Dorsolateral prefrontal cortex (tissue), 120 donors: ENCODE measurements at regions of chr3 and their contacts with region 1.

Region 1: GRCh38 chr3:132253262-132253878 is 63.8 kb upstream of the ACP3 start:
- DNase-seq: no peak
- H3K4me3 ChIP-seq: no peak overlapping the region
- H3K27ac ChIP-seq: no peak overlapping the region
- H3K27me3 ChIP-seq: no peaks in the 10 kb centered on the region
- CTCF ChIP-seq: peak; percentile 30 to 80 (median 67)

Region 2: DNA sequence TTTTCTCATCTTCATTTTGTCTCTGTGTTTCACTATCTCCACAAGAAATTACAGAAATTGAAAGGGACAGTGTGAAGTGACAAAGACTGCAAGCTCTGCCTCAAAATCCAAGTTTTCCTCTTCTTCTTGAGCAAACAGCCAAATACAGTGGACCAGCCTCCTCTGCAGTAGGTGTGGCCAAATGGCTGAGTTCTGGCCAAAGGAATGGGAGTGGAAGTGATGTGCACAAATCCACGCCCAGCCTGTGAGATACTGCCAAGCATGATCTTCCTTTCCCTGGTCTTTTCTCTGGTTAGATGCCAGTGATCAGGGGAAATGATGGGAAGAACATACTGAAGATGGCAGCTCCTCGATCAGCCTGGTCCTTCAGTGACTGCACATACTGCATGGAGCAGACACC is 107.5 kb before region 1 on chr3:
- intact Hi-C with region 1: no loop called
- DNase-seq: no peak
- H3K4me3 ChIP-seq: no peak overlapping the region
- H3K27ac ChIP-seq: peak overlapping the region in 2 of 59 donors; percentile 9 to 40
- H3K27me3 ChIP-seq: no peaks in the 10 kb centered on the region
- CTCF ChIP-seq: no peak

Region 3: DNA sequence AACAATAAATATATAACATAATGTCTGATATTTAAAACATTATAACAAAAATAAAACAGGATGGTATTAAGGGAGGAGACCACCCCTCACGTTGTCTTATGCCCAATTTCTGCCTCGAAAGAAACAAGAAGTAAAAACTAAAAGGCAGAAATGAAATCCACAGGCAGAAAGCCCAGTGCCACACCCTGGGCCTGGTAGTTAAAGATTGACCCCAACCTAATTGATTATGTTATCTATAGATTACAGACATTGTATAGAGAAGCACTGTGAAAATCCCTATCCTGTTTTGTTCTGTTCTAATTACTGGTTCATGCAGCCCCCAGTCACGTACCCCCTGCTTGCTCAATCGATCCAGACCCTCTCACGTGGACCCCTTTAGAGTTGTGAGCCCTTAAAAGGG is 41.5 kb after region 1 on chr3:
- intact Hi-C with region 1: no loop called
- DNase-seq: no peak
- H3K4me3 ChIP-seq: no peak overlapping the region
- H3K27ac ChIP-seq: no peak overlapping the region
- H3K27me3 ChIP-seq: peaks cover 0 to 2% (median 0%) of the 10 kb centered on the region in 45 donors
- CTCF ChIP-seq: no peak

Region 4: GRCh38 chr3:132325103-132325606 is 71.8 kb after region 1 on chr3:
- intact Hi-C with region 1: no loop called
- DNase-seq: no peak
- H3K4me3 ChIP-seq: no peak overlapping the region
- H3K27ac ChIP-seq: no peak overlapping the region
- H3K27me3 ChIP-seq: no peaks in the 10 kb centered on the region
- CTCF ChIP-seq: no peak

Region 5: GRCh38 chr3:132343018-132343612 is 89.7 kb after region 1 on chr3:
- intact Hi-C with region 1: loop called (anchors 2 to 5 kb)
- DNase-seq: peak in 2 of 10 donors; percentile 10 to 27
- H3K4me3 ChIP-seq: peak overlapping the region in 18 of 59 donors; percentile 1 to 43 (median 24)
- H3K27ac ChIP-seq: no peak overlapping the region
- H3K27me3 ChIP-seq: no peaks in the 10 kb centered on the region
- CTCF ChIP-seq: peak; percentile 58 to 90 (median 84)

Region 6: DNA sequence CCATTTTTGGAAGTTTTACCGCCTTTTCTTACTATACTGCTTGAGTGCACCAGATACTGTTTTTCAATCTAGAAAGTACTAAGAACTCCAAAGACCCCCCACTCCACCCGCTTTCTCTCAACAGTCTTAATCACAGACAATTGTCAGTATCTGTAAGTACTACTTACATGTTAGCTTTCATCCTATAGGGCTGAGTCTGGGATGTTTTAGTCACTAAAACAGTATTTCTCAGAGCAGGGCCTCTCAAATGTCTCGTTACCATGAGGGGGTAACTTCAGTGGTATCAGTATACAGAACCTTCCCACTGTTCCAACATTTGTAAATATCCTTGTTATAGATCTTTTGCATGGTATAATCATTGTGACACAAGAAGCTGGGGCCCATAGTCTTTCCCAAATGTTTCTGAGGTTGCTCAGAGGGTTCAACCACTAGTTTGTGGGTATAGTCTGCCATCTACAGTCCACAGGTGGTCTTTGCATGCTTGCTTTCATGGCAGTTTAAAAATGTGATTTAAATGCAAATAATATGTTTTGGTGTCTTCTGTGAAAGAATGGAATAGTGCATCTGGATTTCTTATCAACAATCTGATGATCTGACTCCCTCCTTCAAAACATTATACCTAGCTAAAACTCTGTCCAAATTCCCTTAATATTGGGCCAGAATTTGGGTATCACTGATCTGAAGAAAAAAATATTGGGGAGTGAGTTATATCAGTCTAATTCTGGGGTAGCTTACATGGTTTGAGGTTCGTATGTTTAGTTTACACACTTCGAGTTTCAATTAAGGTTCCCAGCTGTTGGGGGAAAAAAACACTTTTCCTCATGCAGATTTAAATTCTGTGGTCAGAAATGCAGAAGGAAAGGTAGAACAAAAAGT is 145.9 kb after region 1 on chr3:
- intact Hi-C with region 1: loop called (anchors 5 to 10 kb)
- DNase-seq: peak in 2 of 10 donors; percentile 41 to 42
- H3K4me3 ChIP-seq: no peak overlapping the region
- H3K27ac ChIP-seq: no peak overlapping the region
- H3K27me3 ChIP-seq: no peaks in the 10 kb centered on the region
- CTCF ChIP-seq: peak; percentile 39 to 97 (median 82)

Region 7: DNA sequence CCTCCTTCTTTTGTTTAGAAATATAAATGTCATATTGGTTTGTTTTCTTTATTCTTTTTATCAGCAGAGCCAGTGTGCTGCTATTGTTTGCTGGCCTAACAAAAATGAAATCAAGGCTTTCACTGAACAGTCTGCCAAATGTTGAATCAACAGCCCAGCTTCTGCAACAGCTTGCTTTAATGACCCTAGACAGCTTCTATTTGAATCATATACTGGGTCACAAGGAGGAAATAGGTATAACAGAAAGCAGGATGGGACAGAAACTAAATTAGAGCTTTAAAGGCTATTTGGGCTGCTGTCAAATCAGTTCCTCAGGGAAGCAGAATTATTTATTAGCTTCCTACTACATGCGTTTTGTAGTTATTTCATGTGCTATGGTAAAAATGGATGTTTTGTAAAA is 151.8 kb after region 1 on chr3:
- intact Hi-C with region 1: loop called in 1 of 2 experiments (anchors 10 kb)
- DNase-seq: no peak
- H3K4me3 ChIP-seq: no peak overlapping the region
- H3K27ac ChIP-seq: peak overlapping the region in 21 of 59 donors; percentile 1 to 72 (median 40)
- H3K27me3 ChIP-seq: no peaks in the 10 kb centered on the region
- CTCF ChIP-seq: no peak